ENCODE measurements at regions of chr19 and their contacts with region 1.

Region 1: GRCh38 chr19:46513461-46514236 is 18.0 kb upstream of the PNMA8B start:
- DNase-seq: peak; percentile 82
- ATAC-seq: peak; percentile 77
- H3K4me3 Mint-ChIP-seq: no peak overlapping the region
- H3K27ac Mint-ChIP-seq: no peak overlapping the region
- H3K4me1 Mint-ChIP-seq: peaks cover 12% of the 10 kb centered on the region
- H3K27me3 Mint-ChIP-seq: peaks cover 12% of the 10 kb centered on the region
- CTCF ChIP-seq: peak; percentile 98

Region 2: GRCh38 chr19:46392243-46392801 is 121.3 kb before region 1 on chr19:
- CTCF ChIA-PET with region 1: interaction called, 40 read pairs
- POLR2A ChIA-PET with region 1: no interaction called
- intact Hi-C with region 1: no loop called
- DNase-seq: no peak
- ATAC-seq: no peak
- H3K4me3 Mint-ChIP-seq: no peak overlapping the region
- H3K27ac Mint-ChIP-seq: peak overlapping the region; percentile 43
- H3K4me1 Mint-ChIP-seq: peaks cover 8% of the 10 kb centered on the region
- H3K27me3 Mint-ChIP-seq: no peaks in the 10 kb centered on the region
- CTCF ChIP-seq: no peak

Region 3: DNA sequence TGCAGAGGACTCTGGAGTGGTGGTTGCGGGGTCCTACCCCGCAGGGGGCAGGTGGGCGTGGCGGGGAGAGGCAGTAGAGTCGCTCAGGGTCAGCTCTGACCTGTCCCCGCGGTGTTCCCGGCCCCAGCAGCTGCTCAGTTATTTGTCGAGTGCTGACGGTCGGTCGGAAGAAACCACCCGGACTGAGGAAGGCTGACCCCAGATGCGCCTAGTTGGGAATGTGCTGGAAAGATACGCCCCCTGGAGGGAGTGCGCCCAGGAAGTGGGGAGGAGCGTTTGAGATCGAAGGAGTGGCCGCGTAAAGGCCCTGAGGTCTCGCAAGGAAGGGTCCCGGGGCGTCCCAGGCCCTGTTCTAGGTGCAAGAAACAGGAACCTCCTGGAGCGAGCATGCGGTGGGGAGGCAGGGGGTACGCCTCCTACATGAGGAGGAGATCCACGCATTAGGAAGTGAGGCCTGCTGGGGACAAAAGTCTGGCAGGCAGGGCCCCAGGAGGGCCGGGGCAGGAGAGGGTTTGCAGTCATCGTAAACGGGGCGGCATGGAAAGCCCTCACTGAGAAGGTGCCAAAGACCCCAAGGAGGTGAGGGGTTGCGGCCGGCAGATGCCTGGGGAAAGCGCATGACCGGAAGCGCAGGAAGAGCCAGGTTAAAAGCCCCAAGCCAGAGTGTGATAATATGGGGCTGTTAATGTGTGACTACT is 109.4 kb before region 1 on chr19:
- CTCF ChIA-PET with region 1: interaction called, 47 read pairs
- POLR2A ChIA-PET with region 1: no interaction called
- intact Hi-C with region 1: no loop called
- DNase-seq: no peak
- ATAC-seq: no peak
- H3K4me3 Mint-ChIP-seq: peak overlapping the region; percentile 47
- H3K27ac Mint-ChIP-seq: no peak overlapping the region
- H3K4me1 Mint-ChIP-seq: peaks cover 13% of the 10 kb centered on the region
- H3K27me3 Mint-ChIP-seq: peaks cover 56% of the 10 kb centered on the region
- CTCF ChIP-seq: no peak

Region 4: DNA sequence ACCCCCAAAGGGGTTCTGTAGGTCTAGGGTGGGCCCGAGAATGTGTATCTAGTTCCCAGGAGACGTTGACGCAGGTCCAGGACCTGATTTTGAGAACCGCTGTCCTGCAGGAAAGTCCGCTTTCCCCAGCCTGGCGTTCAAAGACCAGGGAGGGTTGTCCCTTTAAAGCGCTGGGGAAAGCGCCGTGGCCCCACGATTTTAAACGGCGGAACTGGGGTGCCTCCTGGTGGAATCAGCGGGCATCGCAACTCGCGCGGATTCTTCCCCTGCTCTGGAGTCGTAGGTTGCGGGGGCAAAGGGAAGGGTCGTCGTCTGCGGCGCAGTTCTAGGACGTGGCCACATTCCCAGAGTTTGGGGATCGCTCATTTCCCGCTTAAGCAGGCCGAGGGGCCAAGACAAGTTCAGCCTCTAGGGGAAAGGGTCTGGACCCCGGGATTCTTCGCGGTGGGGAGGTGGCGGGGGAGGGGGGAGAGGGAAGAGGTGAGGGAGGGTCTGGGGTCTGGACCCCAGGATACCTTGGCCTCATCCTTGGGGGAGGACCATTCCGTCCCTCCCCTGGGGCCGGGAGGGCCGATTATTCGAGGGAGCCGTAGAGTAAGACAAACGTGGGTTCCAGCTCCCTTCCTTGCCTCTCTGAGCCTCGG is 25.7 kb before region 1 on chr19:
- CTCF ChIA-PET with region 1: interaction called, 18 read pairs
- POLR2A ChIA-PET with region 1: no interaction called
- intact Hi-C with region 1: no loop called
- DNase-seq: peak; percentile 83
- ATAC-seq: peak; percentile 80
- H3K4me3 Mint-ChIP-seq: no peak overlapping the region
- H3K27ac Mint-ChIP-seq: no peak overlapping the region
- H3K4me1 Mint-ChIP-seq: peaks cover 10% of the 10 kb centered on the region
- H3K27me3 Mint-ChIP-seq: peaks cover 67% of the 10 kb centered on the region
- CTCF ChIP-seq: peak; percentile 87

Region 5: GRCh38 chr19:46529622-46530462 is 16.2 kb after region 1 on chr19:
- CTCF ChIA-PET with region 1: interaction called, 29 read pairs
- POLR2A ChIA-PET with region 1: interaction called, 3 read pairs
- intact Hi-C with region 1: no loop called
- DNase-seq: peak; percentile 79
- ATAC-seq: peak; percentile 68
- H3K4me3 Mint-ChIP-seq: no peak overlapping the region
- H3K27ac Mint-ChIP-seq: peak overlapping the region; percentile 51
- H3K4me1 Mint-ChIP-seq: peaks cover 12% of the 10 kb centered on the region
- H3K27me3 Mint-ChIP-seq: no peaks in the 10 kb centered on the region
- CTCF ChIP-seq: peak; percentile 99

Region 6: DNA sequence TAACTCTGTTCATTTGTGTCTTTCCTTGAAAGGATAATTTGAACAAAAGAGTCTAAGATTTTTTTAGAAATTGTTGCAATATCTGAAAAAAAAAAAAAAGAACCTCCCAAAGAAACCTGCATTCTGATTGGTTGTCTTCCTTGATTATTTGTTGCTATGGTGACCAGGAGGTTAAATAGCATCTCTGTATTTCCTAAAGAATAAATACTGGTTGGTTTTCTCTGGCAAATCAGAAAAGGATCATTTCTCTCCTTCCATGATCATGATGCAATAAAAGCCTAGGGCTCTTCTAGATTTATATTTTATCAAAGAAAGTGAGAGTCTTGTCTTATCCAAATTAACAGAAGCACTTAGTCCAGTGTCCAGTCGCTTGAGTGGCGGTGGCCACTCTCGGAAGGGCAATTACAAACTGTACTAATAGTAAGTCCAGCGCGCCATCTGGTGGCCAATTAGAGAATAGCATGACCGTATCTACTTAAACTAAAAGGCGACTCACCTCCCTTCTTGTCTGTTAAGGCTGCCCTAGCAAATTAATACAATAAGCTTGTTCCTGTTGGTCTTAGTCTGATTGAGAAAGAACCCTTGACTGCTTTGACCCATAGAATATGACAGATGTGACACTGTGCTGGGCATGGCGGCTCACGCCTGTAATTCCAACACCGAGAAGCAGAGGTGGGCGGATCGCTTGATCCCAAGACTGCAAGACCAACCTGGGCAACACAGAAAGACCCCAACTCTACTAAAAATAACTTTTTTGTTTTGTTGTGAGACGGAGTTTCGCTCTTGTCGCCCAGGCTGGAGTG is 29.0 kb after region 1 on chr19:
- CTCF ChIA-PET with region 1: interaction called, 219 read pairs
- POLR2A ChIA-PET with region 1: no interaction called
- intact Hi-C with region 1: no loop called
- DNase-seq: peak; percentile 96
- ATAC-seq: peak; percentile 72
- H3K4me3 Mint-ChIP-seq: no peak overlapping the region
- H3K27ac Mint-ChIP-seq: no peak overlapping the region
- H3K4me1 Mint-ChIP-seq: peaks cover 2% of the 10 kb centered on the region
- H3K27me3 Mint-ChIP-seq: peaks cover under 1% of the 10 kb centered on the region
- CTCF ChIP-seq: peak; percentile 91

Region 7: DNA sequence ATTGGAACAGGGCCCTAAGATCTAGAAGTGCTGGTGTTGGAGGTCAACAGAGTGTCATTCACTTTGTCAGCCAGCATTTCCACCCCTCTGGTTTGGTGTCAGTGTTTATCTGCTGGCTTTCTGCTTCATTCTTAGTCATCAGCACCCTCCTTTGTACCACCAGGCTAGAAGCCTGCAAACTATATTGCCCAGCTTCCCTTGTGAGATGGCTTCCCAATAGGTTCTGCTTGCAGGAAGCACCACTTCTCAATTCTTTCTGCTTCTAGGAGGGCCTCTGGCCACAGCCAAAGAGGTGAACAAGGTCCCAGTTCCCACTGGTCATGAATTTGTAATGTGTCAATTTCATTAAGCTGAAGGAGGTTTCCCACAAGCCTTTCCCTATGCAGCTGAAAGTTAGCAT is 51.1 kb after region 1 on chr19:
- CTCF ChIA-PET with region 1: no interaction called
- POLR2A ChIA-PET with region 1: no interaction called
- intact Hi-C with region 1: no loop called
- DNase-seq: no peak
- ATAC-seq: no peak
- H3K4me3 Mint-ChIP-seq: no peak overlapping the region
- H3K27ac Mint-ChIP-seq: no peak overlapping the region
- H3K4me1 Mint-ChIP-seq: no peaks in the 10 kb centered on the region
- H3K27me3 Mint-ChIP-seq: no peaks in the 10 kb centered on the region
- CTCF ChIP-seq: no peak

Region 8: GRCh38 chr19:46614114-46614722 is 100.6 kb after region 1 on chr19:
- CTCF ChIA-PET with region 1: no interaction called
- POLR2A ChIA-PET with region 1: no interaction called
- intact Hi-C with region 1: no loop called
- DNase-seq: peak; percentile 92
- ATAC-seq: peak; percentile 55
- H3K4me3 Mint-ChIP-seq: peak overlapping the region; percentile 32
- H3K27ac Mint-ChIP-seq: peak overlapping the region; percentile 89
- H3K4me1 Mint-ChIP-seq: peaks cover 72% of the 10 kb centered on the region
- H3K27me3 Mint-ChIP-seq: no peaks in the 10 kb centered on the region
- CTCF ChIP-seq: peak; percentile 96

Region 9: GRCh38 chr19:46634045-46634655 is 120.5 kb after region 1 on chr19:
- CTCF ChIA-PET with region 1: no interaction called
- POLR2A ChIA-PET with region 1: no interaction called
- intact Hi-C with region 1: no loop called
- DNase-seq: peak; percentile 98
- ATAC-seq: peak; percentile 74
- H3K4me3 Mint-ChIP-seq: peak overlapping the region; percentile 82
- H3K27ac Mint-ChIP-seq: peak overlapping the region; percentile 66
- H3K4me1 Mint-ChIP-seq: peaks cover 18% of the 10 kb centered on the region
- H3K27me3 Mint-ChIP-seq: no peaks in the 10 kb centered on the region
- CTCF ChIP-seq: no peak

Measured in activated CD8-positive, alpha-beta T cell treated with anti-CD3 and anti-CD28 coated beads for 36 hours (primary cell).